Adrenal gland (tissue), 19 donors: ENCODE measurements at regions of chr7 and their contacts with region 1.

Region 1: DNA sequence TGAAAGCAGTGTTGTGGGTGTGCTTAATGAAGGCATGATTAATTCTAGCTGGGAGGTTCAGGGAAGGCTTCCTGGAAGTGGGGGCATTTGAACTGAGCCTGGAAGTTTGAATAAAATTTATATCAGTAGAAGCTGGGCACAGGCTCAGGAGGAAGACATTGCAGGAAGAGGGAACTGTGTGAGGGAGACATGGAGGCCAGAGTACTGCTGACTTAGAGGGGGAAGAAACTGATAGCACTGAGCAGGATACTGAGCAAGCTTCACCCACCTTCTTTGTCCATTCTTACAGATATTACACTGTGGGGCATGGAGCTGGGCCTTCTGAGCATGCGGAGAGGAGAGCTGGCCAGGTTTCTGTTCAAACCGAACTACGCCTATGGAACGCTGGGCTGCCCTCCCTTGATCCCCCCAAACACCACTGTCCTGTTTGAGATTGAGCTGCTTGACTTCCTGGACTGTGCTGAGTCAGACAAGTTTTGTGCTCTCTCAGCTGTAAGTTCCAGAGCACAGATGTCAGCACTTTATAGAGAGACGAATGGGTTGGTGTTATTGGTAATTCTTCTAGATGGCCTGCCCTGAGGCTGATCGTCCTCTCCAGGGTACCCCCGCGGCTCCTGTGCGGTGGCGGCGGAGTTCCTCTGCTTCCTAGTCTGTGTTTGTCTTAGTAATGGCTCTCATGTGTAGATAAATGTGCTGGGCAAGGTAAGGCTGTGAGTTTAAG is 2.1 kb downstream of the FKBP6 start:
- DNase-seq: peak in 1 of 7 donors; percentile 31
- H3K4me3 ChIP-seq: no peak overlapping the region
- H3K27ac ChIP-seq: peak overlapping the region in 2 of 5 donors; percentile 49 to 64
- H3K4me1 ChIP-seq: no peaks in the 10 kb centered on the region
- H3K27me3 ChIP-seq: no peaks in the 10 kb centered on the region
- CTCF ChIP-seq: no peak
- POLR2A ChIP-seq: no peak

Region 2: GRCh38 chr7:73342645-73343044 is 12.6 kb after region 1 on chr7:
- intact Hi-C with region 1: no loop called
- DNase-seq: peak in 2 of 7 donors; percentile 42
- H3K4me3 ChIP-seq: no peak overlapping the region
- H3K27ac ChIP-seq: no peak overlapping the region
- H3K4me1 ChIP-seq: no peaks in the 10 kb centered on the region
- H3K27me3 ChIP-seq: no peaks in the 10 kb centered on the region
- CTCF ChIP-seq: peak in 5 of 6 experiments; percentile 34 to 53 (median 40)
- POLR2A ChIP-seq: no peak

Region 3: DNA sequence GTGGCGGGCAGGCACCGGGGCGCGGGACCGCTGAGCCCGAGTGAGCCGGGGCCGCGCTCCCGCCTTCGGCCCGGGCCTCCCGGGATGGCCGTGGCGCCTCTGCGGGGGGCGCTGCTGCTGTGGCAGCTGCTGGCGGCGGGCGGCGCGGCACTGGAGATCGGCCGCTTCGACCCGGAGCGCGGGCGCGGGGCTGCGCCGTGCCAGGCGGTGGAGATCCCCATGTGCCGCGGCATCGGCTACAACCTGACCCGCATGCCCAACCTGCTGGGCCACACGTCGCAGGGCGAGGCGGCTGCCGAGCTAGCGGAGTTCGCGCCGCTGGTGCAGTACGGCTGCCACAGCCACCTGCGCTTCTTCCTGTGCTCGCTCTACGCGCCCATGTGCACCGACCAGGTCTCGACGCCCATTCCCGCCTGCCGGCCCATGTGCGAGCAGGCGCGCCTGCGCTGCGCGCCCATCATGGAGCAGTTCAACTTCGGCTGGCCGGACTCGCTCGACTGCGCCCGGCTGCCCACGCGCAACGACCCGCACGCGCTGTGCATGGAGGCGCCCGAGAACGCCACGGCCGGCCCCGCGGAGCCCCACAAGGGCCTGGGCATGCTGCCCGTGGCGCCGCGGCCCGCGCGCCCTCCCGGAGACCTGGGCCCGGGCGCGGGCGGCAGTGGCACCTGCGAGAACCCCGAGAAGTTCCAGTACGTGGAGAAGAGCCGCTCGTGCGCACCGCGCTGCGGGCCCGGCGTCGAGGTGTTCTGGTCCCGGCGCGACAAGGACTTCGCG is 104.1 kb after region 1 on chr7:
- intact Hi-C with region 1: loop called in 1 of 2 experiments (anchors 5 kb)
- DNase-seq: no peak
- H3K4me3 ChIP-seq: peak overlapping the region in 1 of 4 donors; percentile 61
- H3K27ac ChIP-seq: no peak overlapping the region
- H3K4me1 ChIP-seq: peaks cover 0 to 4% of the 10 kb centered on the region in 2 donors
- H3K27me3 ChIP-seq: no peaks in the 10 kb centered on the region
- CTCF ChIP-seq: no peak
- POLR2A ChIP-seq: no peak